HCT116 (cell line): ENCODE measurements at regions of chr20 and their contacts with region 1.

Region 1: GRCh38 chr20:36591854-36592641 is 13.5 kb upstream of the RAB5IF start:
- DNase-seq: peak; percentile 22
- ATAC-seq: peak; percentile 74
- H3K4me3 ChIP-seq: no peak overlapping the region
- H3K27ac ChIP-seq: no peak overlapping the region
- H3K4me1 ChIP-seq: peaks cover 5 to 9% of the 10 kb centered on the region in 2 experiments; a peak in 3 of 4 replicates
- H3K27me3 ChIP-seq: no peaks in the 10 kb centered on the region
- CTCF ChIP-seq: peak; percentile 49 to 60 (median 55); a peak in 5 of 6 replicates
- POLR2A ChIP-seq: no peak
- RAD21 ChIP-seq: peak; percentile 47

Region 2: GRCh38 chr20:36550797-36551299 is 41.2 kb before region 1 on chr20:
- CTCF ChIA-PET with region 1: no interaction called
- POLR2A ChIA-PET with region 1: no interaction called
- RAD21 ChIA-PET with region 1: no interaction called
- intact Hi-C with region 1: loop called (anchors 1 kb)
- DNase-seq: no peak
- ATAC-seq: 0 out of 2 replicates have a peak, but pooled peaks have one; percentile 23
- H3K4me3 ChIP-seq: no peak overlapping the region
- H3K27ac ChIP-seq: no peak overlapping the region
- H3K4me1 ChIP-seq: no peaks in the 10 kb centered on the region
- H3K27me3 ChIP-seq: no peaks in the 10 kb centered on the region; the same call in 1 of the 2 replicates
- CTCF ChIP-seq: no peak
- POLR2A ChIP-seq: no peak
- RAD21 ChIP-seq: no peak

Region 3: DNA sequence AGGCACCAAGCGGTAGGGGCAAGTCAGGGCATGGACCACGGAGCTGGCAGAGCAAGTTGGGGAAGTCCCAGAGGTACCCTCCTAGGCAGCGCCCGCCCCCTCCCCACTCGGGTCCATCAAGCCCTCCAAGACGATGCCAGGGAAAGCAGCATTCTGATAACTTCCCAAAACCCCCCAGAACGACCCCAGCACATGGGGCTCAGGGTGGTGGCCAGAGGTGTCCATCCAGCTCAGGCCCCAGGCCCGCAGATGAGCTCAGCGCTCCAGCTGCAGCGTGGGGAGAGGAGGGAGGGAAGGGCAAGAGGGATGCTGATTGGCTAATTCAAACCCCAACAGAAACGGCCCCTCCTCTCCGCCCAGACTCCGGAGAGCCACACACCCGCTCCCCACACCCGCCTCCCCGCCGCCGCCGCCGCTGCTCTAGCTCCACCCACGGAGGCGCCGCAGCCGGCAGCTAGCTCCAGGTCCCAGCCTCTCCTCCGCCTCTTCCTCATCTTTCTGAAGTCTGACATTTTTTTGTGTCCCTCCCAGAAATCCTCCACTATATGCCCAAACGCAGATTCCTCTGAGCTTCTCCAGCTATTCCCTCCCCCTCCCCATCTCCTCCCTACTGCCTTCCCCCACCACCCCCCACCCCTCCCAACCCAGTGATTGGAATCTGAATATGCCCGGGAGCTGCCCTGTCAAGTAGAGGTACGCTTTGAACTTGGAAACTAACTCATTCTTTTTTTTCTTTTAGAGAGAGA is 243.6 kb after region 1 on chr20:
- CTCF ChIA-PET with region 1: no interaction called
- POLR2A ChIA-PET with region 1: no interaction called
- RAD21 ChIA-PET with region 1: no interaction called
- intact Hi-C with region 1: no loop called
- DNase-seq: peak; percentile 80
- ATAC-seq: peak; percentile 90
- H3K4me3 ChIP-seq: peak overlapping the region; percentile 44 to 53
- H3K27ac ChIP-seq: peak overlapping the region; percentile 85
- H3K4me1 ChIP-seq: peaks cover 39 to 59% of the 10 kb centered on the region in 2 experiments
- H3K27me3 ChIP-seq: no peaks in the 10 kb centered on the region
- CTCF ChIP-seq: no peak
- POLR2A ChIP-seq: peak; percentile 24
- RAD21 ChIP-seq: no peak